HCT116 (cell line): ENCODE measurements at regions of chr6 and their contacts with region 1.

Region 1: GRCh38 chr6:118784641-118785164 is 109.2 kb upstream of the ASF1A start:
- DNase-seq: no peak
- ATAC-seq: no peak
- H3K4me3 ChIP-seq: no peak overlapping the region
- H3K27ac ChIP-seq: no peak overlapping the region
- H3K4me1 ChIP-seq: no peaks in the 10 kb centered on the region
- H3K27me3 ChIP-seq: no peaks in the 10 kb centered on the region
- CTCF ChIP-seq: no peak
- POLR2A ChIP-seq: no peak
- RAD21 ChIP-seq: no peak

Region 2: DNA sequence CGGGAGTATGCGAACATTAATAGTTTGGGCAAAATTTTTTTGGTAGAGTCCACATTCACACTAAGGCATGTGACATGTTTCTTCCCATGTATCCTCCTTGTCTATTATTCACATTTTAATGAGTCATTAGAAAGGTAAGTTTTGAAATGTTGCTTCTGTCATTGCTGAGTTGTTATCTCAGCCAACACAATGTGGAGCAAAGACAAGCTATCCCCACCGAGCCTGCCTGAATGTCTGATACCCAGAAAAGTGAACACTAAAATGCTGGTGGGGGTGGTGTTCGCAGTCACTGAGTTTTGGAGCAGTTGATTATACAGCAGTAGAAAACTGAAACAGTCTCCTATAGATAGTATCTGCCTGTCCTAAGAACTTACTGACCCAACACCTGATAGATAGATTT is 41.0 kb after region 1 on chr6:
- CTCF ChIA-PET with region 1: no interaction called
- POLR2A ChIA-PET with region 1: no interaction called
- RAD21 ChIA-PET with region 1: no interaction called
- intact Hi-C with region 1: loop called (anchors 1 kb)
- DNase-seq: no peak
- ATAC-seq: no peak
- H3K4me3 ChIP-seq: no peak overlapping the region
- H3K27ac ChIP-seq: no peak overlapping the region
- H3K4me1 ChIP-seq: no peaks in the 10 kb centered on the region
- H3K27me3 ChIP-seq: no peaks in the 10 kb centered on the region
- CTCF ChIP-seq: no peak
- POLR2A ChIP-seq: no peak
- RAD21 ChIP-seq: no peak